ENCODE measurements at regions of chr12 and their contacts with region 1.

Region 1: DNA sequence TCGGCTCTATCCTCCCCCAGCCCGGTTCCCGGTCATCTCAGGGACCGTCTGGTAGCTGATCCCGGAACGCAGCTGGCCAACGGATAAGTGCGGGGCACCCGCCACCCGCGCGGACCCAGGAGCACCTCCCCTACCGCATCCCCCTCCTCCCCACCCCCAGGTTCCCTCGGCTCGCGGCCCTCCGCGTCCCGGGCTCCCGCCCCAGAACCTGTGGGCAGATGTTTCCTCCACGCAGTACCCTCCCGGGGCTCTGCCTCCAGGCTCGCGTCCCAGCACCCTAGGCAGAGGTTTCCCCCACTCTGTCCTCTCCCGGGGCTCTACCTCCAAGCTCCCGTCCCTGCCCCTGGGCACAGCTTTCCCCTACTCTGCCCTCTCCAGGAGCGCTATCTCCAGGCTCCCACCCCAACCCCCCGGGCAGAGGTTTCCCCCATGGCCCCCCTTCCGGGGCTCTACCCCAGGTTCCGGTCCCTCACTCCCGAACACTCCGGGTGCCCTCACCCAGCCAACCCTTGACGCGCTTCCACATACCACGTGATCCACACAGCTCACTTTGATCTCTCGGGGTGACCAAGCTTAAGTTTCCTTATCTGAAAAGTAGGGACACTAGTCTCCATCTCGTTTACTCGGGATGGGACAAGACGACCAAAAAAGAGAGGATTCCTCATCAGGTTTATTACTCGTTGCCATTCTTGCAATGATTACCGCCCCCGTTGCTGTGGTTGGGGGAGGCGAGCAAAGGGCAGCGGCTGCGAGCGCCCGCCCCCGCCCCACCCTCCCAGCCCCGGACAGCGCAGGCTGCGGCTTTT is at the start of gene CCDC38:
- DNase-seq: peak; percentile 91
- ATAC-seq: peak; percentile 98
- H3K4me3 Mint-ChIP-seq: peak within 1 kb of the TSS; percentile 84
- H3K27ac Mint-ChIP-seq: peak within 1 kb of the TSS; percentile 91
- H3K4me1 Mint-ChIP-seq: peaks cover 4% of the 10 kb centered on the region
- H3K27me3 Mint-ChIP-seq: no peaks in the 10 kb centered on the region
- total RNA-seq, gene CCDC38: 0.21 TPM in 1 of 2 experiments, not detected in the other

Region 2: GRCh38 chr12:95851606-95852005 is 91.1 kb before region 1 on chr12:
- CTCF ChIA-PET with region 1: no interaction called
- POLR2A ChIA-PET with region 1: no interaction called
- intact Hi-C with region 1: loop called in 1 of 2 experiments (anchors 1 kb)
- DNase-seq: no peak
- ATAC-seq: no peak
- H3K4me3 Mint-ChIP-seq: no peak overlapping the region
- H3K27ac Mint-ChIP-seq: no peak overlapping the region
- H3K4me1 Mint-ChIP-seq: no peaks in the 10 kb centered on the region
- H3K27me3 Mint-ChIP-seq: peaks cover 3% of the 10 kb centered on the region

Region 3: GRCh38 chr12:95858479-95859343 is 84.0 kb before region 1 on chr12 and contains the start of gene SNRPF:
- CTCF ChIA-PET with region 1: interaction called, 3 read pairs
- POLR2A ChIA-PET with region 1: no interaction called
- intact Hi-C with region 1: loop called (anchors 2 kb)
- DNase-seq: peak; percentile 95
- ATAC-seq: peak; percentile 95
- H3K4me3 Mint-ChIP-seq: no peak within 1 kb of the TSS
- H3K27ac Mint-ChIP-seq: peak within 1 kb of the TSS; percentile 59
- H3K4me1 Mint-ChIP-seq: peaks cover 28% of the 10 kb centered on the region
- H3K27me3 Mint-ChIP-seq: peaks cover 3% of the 10 kb centered on the region
- total RNA-seq, gene SNRPF: 23.1 to 61.1 TPM

Region 4: GRCh38 chr12:95881331-95881955 is 61.3 kb before region 1 on chr12:
- CTCF ChIA-PET with region 1: no interaction called
- POLR2A ChIA-PET with region 1: no interaction called
- intact Hi-C with region 1: no loop called
- DNase-seq: no peak
- ATAC-seq: no peak
- H3K4me3 Mint-ChIP-seq: no peak overlapping the region
- H3K27ac Mint-ChIP-seq: no peak overlapping the region
- H3K4me1 Mint-ChIP-seq: no peaks in the 10 kb centered on the region
- H3K27me3 Mint-ChIP-seq: no peaks in the 10 kb centered on the region

Region 5: DNA sequence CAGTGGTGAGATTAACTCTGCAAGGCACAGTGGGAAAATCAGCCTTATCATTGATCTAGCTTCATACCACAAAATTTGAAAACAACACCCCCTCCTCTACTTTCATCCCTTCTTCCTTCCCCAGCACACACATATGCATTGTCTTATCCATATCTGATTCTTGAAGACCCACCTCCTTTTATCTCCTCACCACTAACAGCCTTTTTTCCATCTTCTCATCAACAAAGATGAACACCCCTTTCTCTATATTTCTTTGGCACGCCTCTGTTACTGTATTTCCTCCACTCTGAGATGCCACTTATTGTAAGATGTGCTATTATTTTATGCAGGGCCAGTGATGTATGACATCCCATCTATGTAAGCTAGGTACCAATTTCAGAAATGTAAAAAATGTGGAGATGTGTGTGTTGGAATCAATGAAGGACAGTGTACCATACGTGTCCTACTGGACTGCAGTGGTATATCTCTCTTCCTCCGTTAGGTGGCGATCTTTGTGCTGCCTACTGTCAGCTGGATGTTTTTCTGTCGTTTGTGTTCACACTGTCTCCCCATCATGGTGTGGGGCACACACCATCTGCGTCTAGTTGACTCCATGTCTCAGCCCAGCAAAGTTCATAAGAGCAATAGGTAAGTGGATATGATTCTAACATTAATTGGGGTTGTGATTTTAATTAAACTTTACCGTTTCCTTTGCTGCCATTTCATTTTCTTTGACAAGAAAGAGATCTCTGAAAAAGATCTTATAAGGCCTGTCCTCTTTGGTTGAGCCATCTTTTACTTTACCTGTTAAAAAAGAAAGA is 24.3 kb before region 1 on chr12:
- CTCF ChIA-PET with region 1: interaction called, 42 read pairs
- POLR2A ChIA-PET with region 1: no interaction called
- intact Hi-C with region 1: loop called in 1 of 2 experiments (anchors 2 kb)
- DNase-seq: peak; percentile 60
- ATAC-seq: peak; percentile 97
- H3K4me3 Mint-ChIP-seq: no peak overlapping the region
- H3K27ac Mint-ChIP-seq: no peak overlapping the region
- H3K4me1 Mint-ChIP-seq: no peaks in the 10 kb centered on the region
- H3K27me3 Mint-ChIP-seq: no peaks in the 10 kb centered on the region